ENCODE measurements at regions of chr2 and their contacts with region 1.

Region 1: DNA sequence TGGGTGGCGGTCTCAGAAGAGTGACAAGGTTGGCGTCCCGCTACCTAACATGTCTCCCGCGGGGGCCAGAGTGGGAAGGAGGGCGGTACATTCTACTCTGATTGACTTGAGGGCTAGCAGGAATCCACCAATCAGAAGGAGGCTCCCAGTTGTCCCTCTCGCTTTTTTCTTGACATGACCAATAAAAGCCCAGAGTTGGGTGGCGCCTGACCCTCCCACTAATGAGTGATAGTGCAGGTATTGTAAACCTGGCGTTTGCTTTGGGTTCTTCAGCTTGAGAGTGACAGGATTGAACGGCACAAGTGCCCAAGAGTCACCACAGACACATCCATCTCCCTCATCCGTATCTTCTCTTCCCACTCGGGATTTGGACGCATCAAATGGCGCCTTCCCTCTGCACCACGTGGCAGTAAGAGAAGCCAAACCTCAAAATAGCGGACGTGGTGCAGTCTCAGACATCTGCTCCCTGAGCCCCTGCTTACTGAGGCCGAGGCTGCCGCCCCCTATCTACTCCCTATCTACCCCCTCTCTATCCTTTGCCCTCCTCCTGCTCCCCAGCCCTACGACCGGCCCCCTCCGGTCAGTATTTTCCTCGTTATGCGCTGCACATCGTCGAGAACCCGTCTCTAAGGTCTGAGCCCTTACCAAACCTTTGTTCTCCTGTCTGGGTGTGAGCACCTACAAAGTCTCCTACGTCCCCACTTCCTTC is 768 bp upstream of the FAM161A start:
- DNase-seq: peak; percentile 80 to 98 (median 87)
- ATAC-seq: peak; percentile 89
- H3K4me3 ChIP-seq: peak overlapping the region; percentile 79 to 88
- H3K4me3 Mint-ChIP-seq: peak overlapping the region; percentile 97
- H3K27ac ChIP-seq: peak overlapping the region; percentile 64 to 81
- H3K27ac Mint-ChIP-seq: peak overlapping the region; percentile 96
- H3K4me1 ChIP-seq: peaks cover 12% of the 10 kb centered on the region
- H3K4me1 Mint-ChIP-seq: peaks cover 15% of the 10 kb centered on the region
- H3K27me3 ChIP-seq: no peaks in the 10 kb centered on the region
- H3K27me3 Mint-ChIP-seq: no peaks in the 10 kb centered on the region
- CTCF ChIP-seq: no peak

Region 2: GRCh38 chr2:61694312-61695274 is 160.0 kb before region 1 on chr2:
- CTCF ChIA-PET with region 1: no interaction called
- POLR2A ChIA-PET with region 1: no interaction called
- intact Hi-C with region 1: loop called (anchors 1 to 5 kb)
- DNase-seq: peak; percentile 65 to 89 (median 82)
- ATAC-seq: peak; percentile 95
- H3K4me3 ChIP-seq: peak overlapping the region; percentile 88 to 93
- H3K4me3 Mint-ChIP-seq: peak overlapping the region; percentile 90
- H3K27ac ChIP-seq: peak overlapping the region; percentile 43 to 63
- H3K27ac Mint-ChIP-seq: peak overlapping the region; percentile 87
- H3K4me1 ChIP-seq: peaks cover 14% of the 10 kb centered on the region
- H3K4me1 Mint-ChIP-seq: peaks cover 16% of the 10 kb centered on the region
- H3K27me3 ChIP-seq: no peaks in the 10 kb centered on the region
- H3K27me3 Mint-ChIP-seq: no peaks in the 10 kb centered on the region
- CTCF ChIP-seq: peak; percentile 52

Region 3: GRCh38 chr2:61736953-61737352 is 117.7 kb before region 1 on chr2:
- CTCF ChIA-PET with region 1: no interaction called
- POLR2A ChIA-PET with region 1: no interaction called
- intact Hi-C with region 1: no loop called
- DNase-seq: no peak
- ATAC-seq: no peak
- H3K4me3 ChIP-seq: no peak overlapping the region
- H3K4me3 Mint-ChIP-seq: no peak overlapping the region
- H3K27ac ChIP-seq: no peak overlapping the region
- H3K27ac Mint-ChIP-seq: no peak overlapping the region
- H3K4me1 ChIP-seq: no peaks in the 10 kb centered on the region
- H3K4me1 Mint-ChIP-seq: no peaks in the 10 kb centered on the region
- H3K27me3 ChIP-seq: no peaks in the 10 kb centered on the region
- H3K27me3 Mint-ChIP-seq: peaks cover 3% of the 10 kb centered on the region
- CTCF ChIP-seq: no peak

Region 4: GRCh38 chr2:61764035-61764800 is 90.4 kb before region 1 on chr2:
- CTCF ChIA-PET with region 1: no interaction called
- POLR2A ChIA-PET with region 1: interaction called, 3 read pairs
- intact Hi-C with region 1: loop called in 1 of 2 experiments (anchors 1 kb)
- DNase-seq: peak; percentile 91 to 99 (median 94)
- ATAC-seq: peak; percentile 97
- H3K4me3 ChIP-seq: peak overlapping the region; percentile 90 to 91
- H3K4me3 Mint-ChIP-seq: peak overlapping the region; percentile 96
- H3K27ac ChIP-seq: peak overlapping the region; percentile 99 to 100
- H3K27ac Mint-ChIP-seq: peak overlapping the region; percentile 98
- H3K4me1 ChIP-seq: no peaks in the 10 kb centered on the region
- H3K4me1 Mint-ChIP-seq: peaks cover 12% of the 10 kb centered on the region
- H3K27me3 ChIP-seq: no peaks in the 10 kb centered on the region
- H3K27me3 Mint-ChIP-seq: no peaks in the 10 kb centered on the region
- CTCF ChIP-seq: no peak

Region 5: DNA sequence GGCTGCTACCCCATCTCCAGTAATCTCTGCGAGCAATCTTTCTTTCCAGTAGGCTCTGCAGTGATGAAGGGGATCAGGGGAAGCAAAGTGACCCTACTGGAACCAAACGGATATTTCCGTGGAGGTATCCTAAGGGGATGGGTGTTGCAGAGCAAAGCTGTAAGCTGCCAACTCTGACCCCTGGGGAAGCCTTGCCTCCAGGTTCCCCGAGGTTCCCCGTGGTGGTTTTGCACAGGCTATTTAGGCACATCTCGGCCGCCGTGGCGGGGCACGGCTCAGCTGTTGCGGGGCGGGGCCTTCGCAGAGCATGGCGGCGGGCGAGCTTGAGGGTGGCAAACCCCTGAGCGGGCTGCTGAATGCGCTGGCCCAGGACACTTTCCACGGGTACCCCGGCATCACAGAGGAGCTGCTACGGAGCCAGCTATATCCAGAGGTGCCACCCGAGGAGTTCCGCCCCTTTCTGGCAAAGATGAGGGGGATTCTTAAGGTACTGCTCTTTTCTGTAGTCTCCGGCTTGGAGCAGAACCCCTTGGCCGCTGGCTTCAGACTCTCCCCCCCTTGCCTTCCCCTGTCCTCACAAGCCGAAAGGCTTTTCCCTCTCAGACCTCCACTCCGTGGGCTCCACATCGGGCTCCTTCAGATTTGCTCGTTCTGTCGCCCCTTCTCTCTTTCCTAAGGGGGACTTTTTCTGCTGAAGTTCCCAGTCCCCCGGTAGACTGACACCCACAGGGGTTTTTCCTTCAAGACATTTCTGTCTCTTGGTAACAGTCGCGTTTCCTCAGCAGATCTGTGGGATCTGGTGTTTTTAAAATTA is 51.0 kb after region 1 on chr2 and contains the start of gene COMMD1:
- CTCF ChIA-PET with region 1: interaction called, 3 read pairs
- POLR2A ChIA-PET with region 1: interaction called, 4 read pairs
- intact Hi-C with region 1: loop called in 1 of 2 experiments (anchors 1 kb)
- DNase-seq: peak; percentile 58 to 89 (median 79)
- ATAC-seq: peak; percentile 99
- H3K4me3 ChIP-seq: peak within 1 kb of the TSS; percentile 63 to 79
- H3K4me3 Mint-ChIP-seq: peak within 1 kb of the TSS; percentile 97
- H3K27ac ChIP-seq: peak within 1 kb of the TSS; percentile 43 to 59
- H3K27ac Mint-ChIP-seq: peak within 1 kb of the TSS; percentile 90
- H3K4me1 ChIP-seq: peaks cover 16% of the 10 kb centered on the region
- H3K4me1 Mint-ChIP-seq: peaks cover 34% of the 10 kb centered on the region
- H3K27me3 ChIP-seq: no peaks in the 10 kb centered on the region
- H3K27me3 Mint-ChIP-seq: no peaks in the 10 kb centered on the region
- CTCF ChIP-seq: no peak
- total RNA-seq, gene COMMD1: 8.8 to 11.2 TPM

Measured in CD8-positive, alpha-beta T cell (primary cell).